Sciatic nerve (tissue), 2 donors: ENCODE measurements at regions of chr22 and their contacts with region 1.

Region 1: DNA sequence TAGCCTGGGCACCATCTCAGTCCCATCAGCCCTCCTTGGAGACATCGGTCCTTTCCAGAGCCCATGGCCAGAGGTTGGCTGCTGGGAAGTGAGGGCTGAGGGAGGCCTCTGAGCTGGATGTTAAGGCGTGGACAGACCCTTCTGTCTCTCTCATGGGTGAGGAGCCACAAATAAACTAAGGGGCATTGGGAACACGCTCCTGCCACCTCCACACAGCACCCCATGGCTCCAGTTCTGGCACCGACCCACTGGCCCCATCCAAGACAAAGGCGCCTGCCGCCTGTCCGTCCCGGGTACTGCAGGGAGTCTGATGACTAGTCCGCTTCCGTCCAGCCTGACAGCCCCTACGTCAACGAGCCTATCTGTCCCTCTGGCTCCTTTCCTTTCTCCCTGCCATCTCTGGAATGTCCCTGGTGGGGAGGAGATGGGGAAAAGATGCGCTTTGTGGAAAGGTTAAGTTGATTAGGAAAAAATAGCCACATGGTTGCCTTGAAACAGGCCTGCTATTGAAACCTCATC is 10.5 kb downstream of the PDGFB start:
- DNase-seq: no peak
- ATAC-seq: peak; percentile 44

Region 2: DNA sequence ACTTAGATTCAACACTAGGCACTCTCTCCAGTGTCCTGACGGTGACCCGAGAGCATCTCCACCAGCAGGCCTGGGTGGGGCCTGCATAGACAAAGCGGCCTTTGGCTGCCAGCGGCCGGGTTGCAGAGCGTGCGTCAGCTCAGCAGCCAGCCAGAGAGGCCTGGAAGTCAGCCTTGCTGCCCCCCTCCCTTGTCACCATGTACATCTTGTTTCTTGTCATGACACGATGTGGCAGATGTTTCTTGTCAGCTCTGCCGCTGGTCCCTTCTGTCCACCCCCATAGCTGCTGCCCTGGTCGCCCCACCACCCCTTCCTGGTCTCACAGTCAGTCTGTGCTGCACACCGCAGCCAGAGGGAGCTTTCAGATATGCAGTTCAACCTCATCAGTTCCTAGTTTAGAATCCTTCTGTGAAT is 48.7 kb before region 1 on chr22:
- intact Hi-C with region 1: loop called (anchors 5 kb)
- DNase-seq: peak; percentile 75
- ATAC-seq: peak; percentile 94

Region 3: GRCh38 chr22:39253435-39254070 is 19.2 kb after region 1 on chr22:
- intact Hi-C with region 1: no loop called
- DNase-seq: no peak
- ATAC-seq: peak; percentile 59

Region 4: DNA sequence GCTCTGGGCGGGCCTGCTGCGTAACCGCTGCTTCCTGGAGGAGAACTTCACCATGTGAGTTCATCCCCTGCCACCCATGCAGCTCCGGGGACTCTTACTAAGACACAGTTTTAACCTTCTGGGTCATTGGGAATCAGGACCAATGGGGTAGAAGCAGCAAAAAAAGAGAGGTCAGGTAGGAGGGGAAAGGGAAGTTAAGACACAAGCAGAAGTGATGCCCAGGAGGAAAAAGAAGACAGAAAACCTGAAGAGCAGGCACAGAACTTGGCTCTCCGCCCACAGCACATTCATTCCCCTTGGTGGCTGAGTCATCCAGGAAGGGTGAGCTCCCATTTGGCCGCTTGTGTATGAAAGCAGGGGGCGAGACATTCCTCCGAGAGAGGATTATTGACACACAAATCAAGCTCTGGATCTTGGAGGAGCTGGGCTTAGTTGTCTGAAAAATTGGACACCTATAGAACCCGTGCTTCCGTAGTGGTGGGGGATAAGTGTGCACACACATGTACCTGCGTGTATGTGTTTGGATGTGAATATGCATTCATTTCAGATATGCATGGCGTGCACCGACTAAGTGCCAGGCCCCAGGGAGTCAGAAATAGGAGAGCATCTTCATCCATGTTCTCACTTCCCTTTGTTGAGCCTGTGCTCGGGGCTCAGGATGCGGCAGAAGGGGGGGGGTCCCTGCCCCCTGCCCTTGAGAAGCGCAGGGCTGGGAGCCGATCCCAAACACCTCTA is 400.5 kb after region 1 on chr22:
- intact Hi-C with region 1: no loop called
- DNase-seq: no peak
- ATAC-seq: no peak